Mammary epithelial cell (primary cell): ENCODE measurements at regions of chr11 and their contacts with region 1.

Region 1: DNA sequence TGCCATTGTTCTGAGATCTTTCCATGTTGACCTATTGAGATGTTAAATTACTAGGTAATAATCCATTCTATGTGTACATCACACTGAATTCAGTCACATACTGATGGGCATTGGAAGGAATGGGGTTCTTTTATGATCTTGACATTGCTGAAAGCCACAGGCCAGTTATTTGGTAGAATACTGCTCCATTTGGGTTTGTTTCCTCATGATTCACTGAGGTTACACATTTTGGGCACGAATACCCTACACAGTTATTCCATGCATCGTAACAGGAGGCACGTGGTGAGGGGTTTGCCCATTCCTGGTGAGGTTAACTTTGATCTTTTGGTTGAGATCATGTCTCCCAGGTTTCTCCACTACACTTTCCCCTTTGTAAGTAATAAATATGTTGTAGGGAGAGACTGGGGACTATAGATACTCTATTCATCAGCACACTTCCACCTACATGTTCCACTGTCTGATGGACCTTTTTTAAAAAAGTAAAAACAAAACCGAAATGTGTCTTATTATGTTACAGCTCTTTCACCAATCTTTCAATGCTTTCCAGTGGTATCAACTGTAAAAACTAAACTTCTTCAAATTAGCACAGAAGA is 12.0 kb upstream of the FOLR1 start:
- DNase-seq: no peak
- H3K4me3 ChIP-seq: no peak overlapping the region
- H3K27ac ChIP-seq: no peak overlapping the region
- H3K4me1 ChIP-seq: peaks cover 29% of the 10 kb centered on the region
- H3K27me3 ChIP-seq: no peaks in the 10 kb centered on the region
- CTCF ChIP-seq: no peak

Region 2: DNA sequence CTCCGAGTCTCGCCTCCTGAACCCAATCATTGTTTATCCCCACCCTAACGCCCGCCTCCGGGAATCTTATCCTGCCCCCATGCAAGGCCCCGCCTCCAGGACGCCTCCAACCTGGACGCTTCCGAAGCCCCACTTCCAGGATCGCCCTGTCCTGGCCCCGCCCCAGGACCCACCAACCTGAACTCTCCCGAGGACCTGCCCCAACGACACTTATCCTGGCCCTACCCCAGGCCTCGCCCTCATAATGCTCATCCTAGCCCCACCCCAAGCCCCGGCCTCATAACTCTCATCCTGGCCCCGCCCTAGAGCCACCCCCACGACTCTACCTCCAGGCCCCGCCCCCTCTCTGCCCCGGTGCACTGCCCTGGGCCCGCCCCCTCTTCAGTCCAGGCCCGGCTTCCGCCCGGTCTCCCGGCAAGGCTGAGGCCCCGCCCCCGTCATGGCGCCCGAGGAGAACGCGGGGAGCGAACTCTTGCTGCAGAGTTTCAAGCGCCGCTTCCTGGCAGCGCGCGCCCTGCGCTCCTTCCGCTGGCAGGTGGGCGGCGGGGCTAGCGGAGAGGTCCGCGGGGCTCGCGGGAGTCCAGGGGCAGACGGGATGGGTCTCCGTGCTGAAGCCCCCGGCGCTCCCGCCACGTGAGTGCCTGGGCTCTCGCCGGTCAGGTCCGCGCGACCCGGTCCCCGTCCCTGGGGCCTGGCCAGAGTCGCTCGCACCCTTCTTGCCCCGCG is 392.6 kb before region 1 on chr11:
- CTCF ChIA-PET with region 1: no interaction called
- dilution Hi-C with region 1: no loop called
- in situ Hi-C with region 1: no loop called
- intact Hi-C with region 1: loop called (anchors 5 kb)
- DNase-seq: peak; percentile 98
- H3K4me3 ChIP-seq: peak overlapping the region; percentile 58 to 67 (median 66)
- H3K27ac ChIP-seq: peak overlapping the region; percentile 89
- H3K4me1 ChIP-seq: peaks cover 13% of the 10 kb centered on the region
- H3K27me3 ChIP-seq: no peaks in the 10 kb centered on the region
- CTCF ChIP-seq: no peak

Region 3: GRCh38 chr11:71928737-71929452 is 251.0 kb before region 1 on chr11 and contains the start of gene RNF121:
- CTCF ChIA-PET with region 1: no interaction called
- dilution Hi-C with region 1: no loop called
- in situ Hi-C with region 1: no loop called
- intact Hi-C with region 1: no loop called
- DNase-seq: peak; percentile 96
- H3K4me3 ChIP-seq: peak within 1 kb of the TSS; percentile 71 to 96 (median 87)
- H3K27ac ChIP-seq: peak within 1 kb of the TSS; percentile 97
- H3K4me1 ChIP-seq: peaks cover 8% of the 10 kb centered on the region
- H3K27me3 ChIP-seq: no peaks in the 10 kb centered on the region
- CTCF ChIP-seq: no peak
- total RNA-seq, gene RNF121: 32.2 to 33.9 TPM

Region 4: GRCh38 chr11:72024069-72024754 is 155.7 kb before region 1 on chr11:
- CTCF ChIA-PET with region 1: interaction called, 12 read pairs
- dilution Hi-C with region 1: no loop called
- in situ Hi-C with region 1: loop called (anchors 5 kb)
- intact Hi-C with region 1: loop called (anchors 1 kb)
- DNase-seq: no peak
- H3K4me3 ChIP-seq: no peak overlapping the region
- H3K27ac ChIP-seq: no peak overlapping the region
- H3K4me1 ChIP-seq: peaks cover 14% of the 10 kb centered on the region
- H3K27me3 ChIP-seq: no peaks in the 10 kb centered on the region
- CTCF ChIP-seq: no peak

Region 5: DNA sequence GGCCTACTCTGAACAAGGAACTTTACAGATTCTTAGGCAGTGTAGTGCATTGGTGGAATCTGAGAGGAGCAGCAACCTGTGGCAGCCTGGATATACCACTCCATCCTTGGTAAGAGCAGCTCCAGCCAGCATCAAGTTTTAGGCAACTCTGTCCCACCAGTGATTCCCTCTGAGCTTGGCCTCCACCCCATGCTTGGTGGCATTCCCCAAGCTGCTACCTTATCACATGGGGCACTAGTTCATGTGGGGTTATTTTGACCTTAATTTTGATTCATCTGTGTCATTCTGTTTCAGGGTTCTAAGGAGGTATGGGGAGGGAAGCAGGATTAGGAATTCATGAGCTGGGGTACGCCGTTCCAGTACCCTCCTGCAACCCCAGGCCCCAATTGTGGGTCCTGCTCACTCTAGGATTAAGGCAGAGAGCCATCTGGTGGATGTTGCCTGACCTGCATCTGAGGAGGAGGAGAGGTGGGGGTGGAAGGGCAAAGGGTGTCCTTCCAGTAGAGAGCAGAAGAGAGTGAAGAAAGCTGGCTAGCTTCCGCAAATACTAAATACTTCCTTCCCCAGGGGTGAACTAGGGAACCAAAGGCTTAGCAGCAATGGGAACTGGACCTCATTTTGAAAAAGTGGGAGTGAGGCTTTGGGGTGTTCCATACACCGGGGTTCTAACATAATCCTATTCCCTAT is 88.8 kb before region 1 on chr11:
- CTCF ChIA-PET with region 1: no interaction called
- dilution Hi-C with region 1: no loop called
- in situ Hi-C with region 1: no loop called
- intact Hi-C with region 1: loop called (anchors 1 kb)
- DNase-seq: peak; percentile 38
- H3K4me3 ChIP-seq: no peak overlapping the region
- H3K27ac ChIP-seq: no peak overlapping the region
- H3K4me1 ChIP-seq: peaks cover 3% of the 10 kb centered on the region
- H3K27me3 ChIP-seq: no peaks in the 10 kb centered on the region
- CTCF ChIP-seq: peak; percentile 84 to 89

Region 6: GRCh38 chr11:72112321-72113219 is 67.3 kb before region 1 on chr11 and contains the start of gene ANAPC15:
- CTCF ChIA-PET with region 1: no interaction called
- dilution Hi-C with region 1: no loop called
- in situ Hi-C with region 1: no loop called
- intact Hi-C with region 1: loop called (anchors 1 kb)
- DNase-seq: peak; percentile 100
- H3K4me3 ChIP-seq: peak within 1 kb of the TSS; percentile 71 to 80 (median 71)
- H3K27ac ChIP-seq: peak within 1 kb of the TSS; percentile 97
- H3K4me1 ChIP-seq: peaks cover 38% of the 10 kb centered on the region
- H3K27me3 ChIP-seq: no peaks in the 10 kb centered on the region
- CTCF ChIP-seq: no peak
- total RNA-seq, gene ANAPC15: 21.7 to 64.8 TPM

Region 7: DNA sequence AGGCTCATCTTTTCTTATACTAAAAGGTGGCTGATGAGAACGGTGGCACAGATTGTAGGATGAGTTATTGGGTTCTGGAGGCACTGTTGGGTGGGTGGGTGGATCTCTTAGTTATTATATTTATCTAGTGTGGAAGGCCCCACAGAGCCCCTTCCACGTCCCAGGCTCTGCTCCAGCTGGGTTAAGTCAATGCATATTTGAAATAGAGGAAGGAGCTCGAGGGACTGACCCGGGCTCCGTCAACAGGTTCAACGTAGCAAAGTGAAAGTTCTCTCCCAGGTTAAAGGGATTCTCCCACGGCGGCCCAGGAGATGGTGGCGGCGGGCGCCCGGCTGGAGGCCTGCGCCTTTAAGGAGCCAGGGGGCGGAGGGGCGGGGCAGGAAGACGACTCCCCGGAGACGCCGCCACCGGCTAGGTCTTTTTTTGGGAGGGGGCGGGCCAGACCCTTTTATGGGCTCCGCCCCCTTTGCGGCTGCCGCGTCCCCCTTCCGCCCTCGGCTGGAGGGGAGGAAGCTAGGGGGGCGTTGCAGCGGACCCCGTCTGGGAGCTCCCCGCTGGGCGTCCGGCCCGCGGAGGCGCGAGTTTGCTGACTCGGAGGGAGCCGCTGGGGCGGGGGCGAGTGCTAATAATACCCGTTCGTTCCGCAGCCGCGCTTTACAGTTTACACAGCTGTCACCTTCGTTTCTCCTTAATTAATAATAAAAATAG is 43.2 kb after region 1 on chr11:
- CTCF ChIA-PET with region 1: interaction called, 3 read pairs
- dilution Hi-C with region 1: no loop called
- in situ Hi-C with region 1: no loop called
- intact Hi-C with region 1: loop called (anchors 1 kb)
- DNase-seq: peak; percentile 87
- H3K4me3 ChIP-seq: peak overlapping the region; percentile 81 to 88 (median 85)
- H3K27ac ChIP-seq: peak overlapping the region; percentile 56
- H3K4me1 ChIP-seq: peaks cover 32% of the 10 kb centered on the region
- H3K27me3 ChIP-seq: no peaks in the 10 kb centered on the region
- CTCF ChIP-seq: peak in 1 of 2 donors; percentile 37

Region 8: GRCh38 chr11:72430741-72431570 is 251.1 kb after region 1 on chr11:
- CTCF ChIA-PET with region 1: interaction called, 4 read pairs
- dilution Hi-C with region 1: no loop called
- in situ Hi-C with region 1: no loop called
- intact Hi-C with region 1: loop called (anchors 5 kb)
- DNase-seq: peak; percentile 30
- H3K4me3 ChIP-seq: no peak overlapping the region
- H3K27ac ChIP-seq: no peak overlapping the region
- H3K4me1 ChIP-seq: peaks cover 16% of the 10 kb centered on the region
- H3K27me3 ChIP-seq: no peaks in the 10 kb centered on the region
- CTCF ChIP-seq: peak; percentile 79 to 81